ENCODE measurements at regions of chr13 and their contacts with region 1.

Region 1: GRCh38 chr13:97855570-97856303 is 97.7 kb upstream of the IPO5 start:
- DNase-seq: peak; percentile 26
- ATAC-seq: peak; percentile 39
- H3K4me3 Mint-ChIP-seq: no peak overlapping the region
- H3K27ac Mint-ChIP-seq: no peak overlapping the region
- H3K4me1 Mint-ChIP-seq: no peaks in the 10 kb centered on the region
- H3K27me3 Mint-ChIP-seq: peaks cover 13% of the 10 kb centered on the region

Region 2: GRCh38 chr13:97911311-97912128 is 55.8 kb after region 1 on chr13:
- CTCF ChIA-PET with region 1: interaction called, 7 read pairs
- POLR2A ChIA-PET with region 1: no interaction called
- intact Hi-C with region 1: loop called (anchors 2 to 5 kb)
- DNase-seq: peak; percentile 54
- ATAC-seq: peak; percentile 76
- H3K4me3 Mint-ChIP-seq: no peak overlapping the region
- H3K27ac Mint-ChIP-seq: no peak overlapping the region
- H3K4me1 Mint-ChIP-seq: no peaks in the 10 kb centered on the region
- H3K27me3 Mint-ChIP-seq: peaks cover 11% of the 10 kb centered on the region

Region 3: GRCh38 chr13:97975848-97976609 is 120.3 kb after region 1 on chr13:
- CTCF ChIA-PET with region 1: interaction called, 4 read pairs
- POLR2A ChIA-PET with region 1: no interaction called
- intact Hi-C with region 1: loop called in 1 of 2 experiments (anchors 5 kb)
- DNase-seq: peak; percentile 94
- ATAC-seq: peak; percentile 92
- H3K4me3 Mint-ChIP-seq: peak overlapping the region; percentile 99
- H3K27ac Mint-ChIP-seq: peak overlapping the region; percentile 96
- H3K4me1 Mint-ChIP-seq: peaks cover 31% of the 10 kb centered on the region
- H3K27me3 Mint-ChIP-seq: no peaks in the 10 kb centered on the region

Region 4: GRCh38 chr13:98445340-98446233 is 589.9 kb after region 1 on chr13:
- CTCF ChIA-PET with region 1: interaction called, 3 read pairs
- POLR2A ChIA-PET with region 1: no interaction called
- intact Hi-C with region 1: loop called in 1 of 2 experiments (anchors 5 kb)
- DNase-seq: peak; percentile 89
- ATAC-seq: peak; percentile 95
- H3K4me3 Mint-ChIP-seq: no peak overlapping the region
- H3K27ac Mint-ChIP-seq: peak overlapping the region; percentile 88
- H3K4me1 Mint-ChIP-seq: peaks cover 15% of the 10 kb centered on the region
- H3K27me3 Mint-ChIP-seq: no peaks in the 10 kb centered on the region

Region 5: GRCh38 chr13:98842864-98843481 is 987.2 kb after region 1 on chr13:
- CTCF ChIA-PET with region 1: no interaction called
- POLR2A ChIA-PET with region 1: no interaction called
- intact Hi-C with region 1: loop called in 1 of 2 experiments (anchors 1 kb)
- DNase-seq: peak; percentile 86
- ATAC-seq: peak; percentile 88
- H3K4me3 Mint-ChIP-seq: no peak overlapping the region
- H3K27ac Mint-ChIP-seq: no peak overlapping the region
- H3K4me1 Mint-ChIP-seq: no peaks in the 10 kb centered on the region
- H3K27me3 Mint-ChIP-seq: no peaks in the 10 kb centered on the region

Measured in activated CD4-positive, alpha-beta T cell treated with anti-CD3 and anti-CD28 coated beads for 36 hours (primary cell).